ENCODE measurements at regions of chr16 and their contacts with region 1.

Region 1: GRCh38 chr16:24789881-24790280 is 55.9 kb upstream of the SLC5A11 start:
- DNase-seq: no peak
- ATAC-seq: no peak
- H3K4me3 ChIP-seq: no peak overlapping the region
- H3K27ac ChIP-seq: no peak overlapping the region
- H3K4me1 ChIP-seq: peaks cover 0 to 15% (median 8%) of the 10 kb centered on the region in 12 donors
- H3K27me3 ChIP-seq: no peaks in the 10 kb centered on the region
- CTCF ChIP-seq: no peak
- POLR2A ChIP-seq: no peak

Region 2: DNA sequence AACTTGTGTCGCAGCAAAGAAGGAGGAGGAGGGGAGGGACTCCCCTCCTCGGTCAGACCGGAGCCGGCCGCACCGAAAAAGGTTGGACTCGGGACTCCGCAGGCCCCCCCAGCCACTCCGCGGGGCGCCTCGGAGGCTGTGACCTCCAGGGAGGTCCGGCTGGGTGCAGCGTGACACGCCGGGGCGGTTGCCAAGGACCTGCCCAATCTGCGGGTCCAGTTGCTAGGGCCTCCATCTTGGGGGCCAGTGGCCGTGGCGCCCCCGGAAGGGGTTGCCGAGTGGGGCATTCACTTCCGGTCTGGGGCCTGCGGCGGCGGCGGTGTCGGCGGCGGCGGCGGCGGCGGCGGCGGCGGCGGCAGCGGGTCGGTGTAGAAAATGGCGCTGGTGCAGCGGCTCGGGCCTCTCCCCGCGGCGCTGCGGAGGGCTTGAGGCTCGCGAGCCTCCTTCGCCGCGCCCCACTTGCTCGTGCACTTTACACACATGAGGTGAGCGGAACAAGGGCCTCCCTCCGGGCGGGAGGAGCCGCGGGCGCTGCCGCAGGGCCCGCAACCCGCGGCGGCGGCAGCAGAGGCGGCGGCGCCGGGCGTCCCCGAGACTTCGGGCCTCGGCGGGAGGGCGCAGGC is 60.4 kb before region 1 on chr16 and contains the start of gene TNRC6A:
- intact Hi-C with region 1: loop called in 1 of 10 experiments (anchors 10 kb)
- DNase-seq: peak; percentile 91 to 96 (median 94)
- ATAC-seq: peak; percentile 89 to 96 (median 94)
- H3K4me3 ChIP-seq: peak within 1 kb of the TSS; percentile 57 to 94 (median 84)
- H3K27ac ChIP-seq: peak within 1 kb of the TSS; percentile 83 to 99 (median 94)
- H3K4me1 ChIP-seq: peaks cover 3 to 43% (median 37%) of the 10 kb centered on the region in 12 donors
- H3K27me3 ChIP-seq: no peaks in the 10 kb centered on the region
- CTCF ChIP-seq: no peak
- POLR2A ChIP-seq: peak in 1 of 2 donors; percentile 72
- total RNA-seq, gene TNRC6A: 26.4 to 53.1 (median 37.6) TPM

Region 3: GRCh38 chr16:24950275-24950674 is 160.4 kb after region 1 on chr16:
- intact Hi-C with region 1: loop called in 1 of 10 experiments (anchors 10 kb)
- DNase-seq: no peak
- ATAC-seq: no peak
- H3K4me3 ChIP-seq: no peak overlapping the region
- H3K27ac ChIP-seq: no peak overlapping the region
- H3K4me1 ChIP-seq: no peaks in the 10 kb centered on the region
- H3K27me3 ChIP-seq: no peaks in the 10 kb centered on the region
- CTCF ChIP-seq: no peak
- POLR2A ChIP-seq: no peak

Measured in heart left ventricle (tissue), 16 donors.